Activated CD8-positive, alpha-beta T cell treated with anti-CD3 and anti-CD28 coated beads for 36 hours (primary cell): ENCODE measurements at regions of chr21 and their contacts with region 1.

Region 1: DNA sequence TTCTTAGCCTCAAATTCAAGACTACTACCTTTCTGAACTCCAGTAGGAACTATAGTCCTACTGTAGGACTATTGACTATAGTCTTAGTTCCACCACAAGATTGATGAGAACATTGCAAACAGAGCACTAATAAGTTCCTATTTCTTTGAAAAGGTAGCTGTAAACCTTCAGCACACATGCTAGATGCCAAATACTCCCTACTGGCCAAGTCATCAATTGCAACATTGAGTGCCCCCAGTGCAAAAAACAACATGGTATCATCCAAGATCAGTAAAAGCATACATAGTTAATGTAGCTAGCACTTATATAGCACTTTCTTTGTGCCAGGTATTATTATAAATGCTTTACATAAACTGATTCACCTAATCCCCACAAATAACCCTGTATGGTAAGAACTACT is 99.8 kb downstream of the MRPL39 start:
- DNase-seq: peak; percentile 46
- ATAC-seq: peak; percentile 43
- H3K4me3 Mint-ChIP-seq: peak overlapping the region; percentile 50
- H3K27ac Mint-ChIP-seq: peak overlapping the region; percentile 55
- H3K4me1 Mint-ChIP-seq: peaks cover 63% of the 10 kb centered on the region
- H3K27me3 Mint-ChIP-seq: no peaks in the 10 kb centered on the region
- CTCF ChIP-seq: peak; percentile 28

Region 2: GRCh38 chr21:25568246-25568645 is 60.7 kb after region 1 on chr21:
- CTCF ChIA-PET with region 1: interaction called, 7 read pairs
- POLR2A ChIA-PET with region 1: interaction called, 179 read pairs
- intact Hi-C with region 1: no loop called
- DNase-seq: peak; percentile 42
- ATAC-seq: no peak
- H3K4me3 Mint-ChIP-seq: peak overlapping the region; percentile 83
- H3K27ac Mint-ChIP-seq: peak overlapping the region; percentile 98
- H3K4me1 Mint-ChIP-seq: peaks cover 39% of the 10 kb centered on the region
- H3K27me3 Mint-ChIP-seq: no peaks in the 10 kb centered on the region
- CTCF ChIP-seq: no peak

Region 3: GRCh38 chr21:25584833-25585676 is 77.5 kb after region 1 on chr21:
- CTCF ChIA-PET with region 1: no interaction called
- POLR2A ChIA-PET with region 1: no interaction called
- intact Hi-C with region 1: no loop called
- DNase-seq: no peak
- ATAC-seq: no peak
- H3K4me3 Mint-ChIP-seq: no peak overlapping the region
- H3K27ac Mint-ChIP-seq: peak overlapping the region; percentile 43
- H3K4me1 Mint-ChIP-seq: peaks cover 36% of the 10 kb centered on the region
- H3K27me3 Mint-ChIP-seq: no peaks in the 10 kb centered on the region
- CTCF ChIP-seq: no peak